HEK293 (cell line): ENCODE measurements at regions of chr15 and their contacts with region 1.

Region 1: DNA sequence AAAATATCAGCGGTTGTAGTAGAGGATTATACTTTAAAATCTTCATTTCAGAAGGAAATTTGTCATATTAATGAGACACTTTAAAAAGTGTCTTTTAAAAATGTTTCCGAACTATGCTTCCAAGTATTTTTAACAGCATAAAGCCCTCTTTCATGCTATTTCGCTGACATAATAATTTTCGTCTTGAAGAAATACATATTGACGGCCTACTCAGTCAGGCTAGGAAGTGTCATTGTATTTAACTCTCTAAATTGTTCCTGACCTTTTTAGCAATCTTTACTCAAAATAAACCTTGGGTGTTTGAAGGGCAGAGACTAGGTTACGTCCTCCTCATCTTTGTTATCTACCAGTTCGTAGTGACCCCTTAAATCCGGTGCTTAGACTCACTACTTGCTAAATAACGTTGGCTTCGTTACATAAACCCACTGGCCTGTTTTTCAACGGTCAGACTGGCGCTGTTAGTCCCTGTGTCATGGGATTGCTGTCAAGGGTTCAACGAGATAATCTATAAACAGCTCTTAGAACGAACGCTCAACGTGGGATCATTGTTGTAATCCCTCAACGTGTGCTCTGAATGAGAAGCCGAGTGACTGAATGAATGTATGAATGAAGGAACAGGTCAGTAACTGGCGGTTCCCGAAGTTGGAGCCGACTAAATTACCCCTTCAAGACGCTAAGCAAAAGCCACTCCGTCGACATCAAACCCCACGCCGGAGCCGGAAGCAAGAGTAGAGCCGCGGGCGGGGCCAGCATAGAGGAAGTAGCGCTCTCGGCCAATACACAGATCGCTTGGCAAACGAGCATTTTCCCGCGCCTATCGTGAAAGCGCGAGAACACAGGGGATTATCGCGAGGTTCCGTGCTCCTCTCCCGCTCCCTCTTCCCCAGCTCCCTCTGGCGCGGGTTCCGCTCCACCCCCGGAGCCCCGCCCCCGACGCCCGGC is 516 bp upstream of the LRRC28 start:
- H3K4me3 ChIP-seq: peak overlapping the region; percentile 88
- H3K27ac ChIP-seq: peak overlapping the region; percentile 93
- H3K4me1 ChIP-seq: peaks cover 18% of the 10 kb centered on the region; the same call in 1 of the 2 replicates
- CTCF ChIP-seq: no peak

Region 2: DNA sequence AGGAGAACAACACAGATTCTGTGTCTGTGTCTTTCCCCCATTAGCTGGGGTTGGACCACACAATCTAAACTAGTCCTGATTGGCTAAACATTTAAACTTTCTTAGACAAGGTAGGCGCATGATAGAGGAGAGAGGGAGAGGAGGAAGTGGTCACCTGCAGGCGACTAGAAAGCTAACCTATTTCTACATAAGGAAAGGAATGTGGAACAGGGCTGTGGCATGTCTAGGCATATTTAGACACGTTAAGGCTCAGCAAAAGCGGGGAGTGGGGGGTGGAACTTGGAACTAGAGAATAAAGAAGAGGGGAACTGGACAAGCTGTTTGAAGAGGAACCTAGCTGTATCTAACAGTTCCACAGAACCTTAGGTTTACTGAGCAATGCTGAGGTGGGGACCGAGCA is 13.4 kb after region 1 on chr15:
- CTCF ChIA-PET with region 1: interaction called, 4 read pairs
- POLR2A ChIA-PET with region 1: interaction called, 14 read pairs
- H3K4me3 ChIP-seq: no peak overlapping the region
- H3K27ac ChIP-seq: no peak overlapping the region
- H3K4me1 ChIP-seq: peaks cover 12% of the 10 kb centered on the region
- CTCF ChIP-seq: no peak

Region 3: DNA sequence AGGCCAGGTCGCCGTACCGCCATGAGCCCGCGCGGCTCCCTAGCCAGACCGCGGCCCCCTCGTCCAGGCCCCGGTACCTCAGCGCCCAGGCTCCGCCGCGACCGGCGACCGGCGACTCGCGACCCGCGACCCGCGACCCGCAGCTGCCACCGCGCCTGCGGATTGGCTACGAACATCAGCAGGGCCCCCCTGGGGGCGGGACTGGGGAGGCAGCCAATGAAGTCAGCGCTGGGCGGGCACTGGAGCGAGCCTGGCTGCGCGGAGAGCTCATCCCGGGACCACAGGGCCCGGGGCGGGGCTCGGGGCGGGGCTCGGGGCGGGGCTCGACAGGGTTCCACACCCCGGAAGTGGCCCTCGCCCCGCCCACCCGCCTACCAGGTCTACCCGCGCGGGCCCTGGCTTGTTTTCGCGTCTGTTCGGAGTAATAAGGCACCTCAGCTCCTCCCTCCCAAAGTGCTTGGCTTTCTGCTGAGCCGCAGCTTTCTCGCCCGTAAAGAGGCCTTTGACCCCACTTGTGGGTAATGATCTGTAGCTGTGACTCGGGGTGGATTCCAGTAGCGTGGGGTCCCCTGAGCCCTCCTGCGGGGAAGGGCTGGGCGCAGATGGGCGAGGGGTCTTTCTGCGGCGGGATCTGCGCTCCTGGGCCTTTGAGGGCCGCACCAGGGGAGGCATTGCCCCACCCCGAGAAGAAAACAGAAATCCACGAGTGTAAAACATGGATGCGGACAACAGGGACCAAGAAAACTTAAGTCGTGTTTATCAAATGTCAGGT is 482.7 kb after region 1 on chr15 and contains the start of gene LYSMD4:
- CTCF ChIA-PET with region 1: no interaction called
- POLR2A ChIA-PET with region 1: interaction called, 12 read pairs
- H3K4me3 ChIP-seq: peak within 1 kb of the TSS; percentile 81
- H3K27ac ChIP-seq: peak within 1 kb of the TSS; percentile 67
- H3K4me1 ChIP-seq: peaks cover 5% of the 10 kb centered on the region; the same call in 1 of the 2 replicates
- CTCF ChIP-seq: no peak